Colonic mucosa (tissue), 4 donors: ENCODE measurements at regions of chr7 and their contacts with region 1.

Region 1: DNA sequence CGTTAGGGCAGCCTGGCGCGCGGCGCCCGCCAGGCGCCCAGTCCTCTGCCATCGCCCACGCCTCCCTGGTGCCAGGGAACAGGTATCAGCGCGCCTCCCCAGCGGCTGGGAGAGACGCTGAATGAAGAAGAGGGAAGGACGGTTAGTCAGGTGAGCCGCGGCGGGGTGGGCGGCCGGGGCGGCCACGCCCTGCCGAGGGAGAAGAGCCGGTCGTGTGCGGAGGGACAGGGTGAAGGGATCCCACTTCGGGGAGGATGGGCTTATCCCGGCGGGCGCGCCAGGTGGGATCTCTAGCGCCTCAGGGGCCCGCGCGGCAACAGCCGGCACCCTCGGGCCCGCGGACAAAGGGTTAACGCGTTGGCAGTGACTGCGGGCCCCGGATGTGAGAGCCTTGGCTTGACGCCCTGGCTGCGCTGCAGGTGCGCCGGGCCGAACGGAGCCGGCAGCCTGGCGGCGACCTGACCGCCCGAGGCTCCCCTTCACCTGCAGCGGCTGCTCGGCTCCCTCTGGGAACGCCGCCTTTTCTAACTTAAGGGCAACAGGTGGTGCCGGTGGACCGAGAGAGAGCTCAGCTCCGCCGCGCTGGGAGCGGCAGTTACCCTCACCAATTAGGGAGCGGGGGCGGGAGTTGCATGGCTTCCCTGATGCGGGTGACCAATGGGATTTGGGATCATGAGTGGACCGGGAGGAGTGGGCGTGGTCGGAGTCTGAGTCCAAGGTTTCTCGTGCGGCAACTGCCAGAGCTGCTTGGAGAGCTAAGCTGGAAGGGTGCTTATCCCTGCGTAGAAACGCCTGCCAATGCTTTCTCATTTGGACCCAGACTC is at the start of gene ARL4A:
- DNase-seq: peak; percentile 100
- H3K4me3 ChIP-seq: peak within 1 kb of the TSS; percentile 77
- H3K27ac ChIP-seq: peak within 1 kb of the TSS; percentile 90
- H3K4me1 ChIP-seq: no peaks in the 10 kb centered on the region
- H3K27me3 ChIP-seq: no peaks in the 10 kb centered on the region
- CTCF ChIP-seq: no peak
- total RNA-seq, gene ARL4A: 27.5 to 88.8 TPM

Region 2: DNA sequence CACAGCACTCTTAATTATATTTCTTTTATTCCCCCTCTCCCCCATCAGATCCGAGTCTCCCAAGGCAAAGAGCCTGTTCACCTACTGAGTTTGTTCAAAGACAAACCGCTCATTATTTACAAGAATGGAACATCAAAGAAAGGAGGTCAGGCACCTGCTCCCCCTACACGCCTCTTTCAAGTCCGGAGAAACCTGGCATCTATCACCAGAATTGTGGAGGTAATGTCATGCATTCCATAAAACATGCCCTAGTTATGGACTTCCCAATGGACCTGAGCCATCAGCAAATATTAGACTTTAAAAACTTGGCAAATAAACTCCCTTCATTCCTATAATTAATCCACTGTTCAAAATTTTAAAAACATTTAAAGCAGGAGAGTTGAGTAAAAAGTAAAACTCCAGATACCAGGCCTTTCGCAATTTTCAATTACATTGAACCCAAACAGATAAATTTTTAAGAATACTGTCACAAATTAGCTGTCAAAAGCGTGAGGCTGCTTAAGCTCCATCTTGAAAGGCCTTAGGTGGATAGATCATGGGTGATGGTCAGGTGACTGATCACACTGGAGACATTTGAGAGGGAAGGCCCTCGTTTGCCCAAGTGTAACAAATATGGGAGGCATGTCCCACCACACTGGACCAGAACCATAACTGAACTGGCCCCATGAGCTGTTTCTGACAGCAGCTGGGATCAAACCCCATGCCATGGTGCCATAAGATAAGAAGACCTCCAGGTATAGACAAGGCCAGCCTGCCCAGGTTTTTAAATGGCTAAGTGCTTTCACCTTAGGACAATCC is 46.6 kb before region 1 on chr7:
- intact Hi-C with region 1: loop called (anchors 2 kb)
- DNase-seq: no peak
- H3K4me3 ChIP-seq: no peak overlapping the region
- H3K27ac ChIP-seq: no peak overlapping the region
- H3K4me1 ChIP-seq: peaks cover 5% of the 10 kb centered on the region
- H3K27me3 ChIP-seq: no peaks in the 10 kb centered on the region
- CTCF ChIP-seq: no peak

Region 3: GRCh38 chr7:12771378-12771877 is 84.3 kb after region 1 on chr7:
- intact Hi-C with region 1: no loop called
- DNase-seq: peak; percentile 64
- H3K4me3 ChIP-seq: peak overlapping the region; percentile 0
- H3K27ac ChIP-seq: peak overlapping the region; percentile 63
- H3K4me1 ChIP-seq: no peaks in the 10 kb centered on the region
- H3K27me3 ChIP-seq: no peaks in the 10 kb centered on the region
- CTCF ChIP-seq: no peak

Region 4: GRCh38 chr7:12929476-12930140 is 242.5 kb after region 1 on chr7:
- intact Hi-C with region 1: loop called (anchors 10 kb)
- DNase-seq: no peak
- H3K4me3 ChIP-seq: no peak overlapping the region
- H3K27ac ChIP-seq: no peak overlapping the region
- H3K4me1 ChIP-seq: no peaks in the 10 kb centered on the region
- H3K27me3 ChIP-seq: no peaks in the 10 kb centered on the region
- CTCF ChIP-seq: no peak

Region 5: GRCh38 chr7:13117103-13117502 is 430.0 kb after region 1 on chr7:
- intact Hi-C with region 1: loop called (anchors 5 kb)
- DNase-seq: no peak
- H3K4me3 ChIP-seq: no peak overlapping the region
- H3K27ac ChIP-seq: no peak overlapping the region
- H3K4me1 ChIP-seq: no peaks in the 10 kb centered on the region
- H3K27me3 ChIP-seq: no peaks in the 10 kb centered on the region
- CTCF ChIP-seq: peak; percentile 31

Region 6: DNA sequence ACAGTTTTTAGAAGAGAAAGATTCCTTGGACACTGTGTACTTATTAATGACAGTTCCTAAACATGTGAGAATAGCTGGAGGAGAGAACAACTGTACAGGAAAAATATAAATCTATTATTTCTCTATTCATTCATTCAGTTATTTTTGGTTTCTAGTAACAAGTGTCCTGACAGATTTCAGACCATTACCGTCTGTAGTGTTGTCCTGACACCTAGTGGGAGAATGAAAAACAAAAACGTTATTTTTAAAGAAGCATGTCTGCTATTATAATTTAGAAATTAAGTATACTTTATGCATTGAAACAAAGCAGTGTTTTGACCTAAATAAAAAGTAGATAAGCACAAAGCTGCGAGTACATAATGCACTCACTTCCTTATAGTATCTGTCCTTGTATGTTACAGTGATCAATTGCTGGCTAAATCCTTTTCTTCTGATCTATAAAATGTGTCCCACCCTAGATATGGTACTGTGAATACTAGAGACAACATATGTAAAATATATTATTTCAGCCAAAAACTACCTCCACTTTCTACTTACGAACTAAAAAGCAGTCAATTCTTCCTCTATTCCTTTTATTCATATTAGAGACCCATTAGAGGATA is 575.9 kb after region 1 on chr7:
- intact Hi-C with region 1: loop called (anchors 5 kb)
- DNase-seq: no peak
- H3K4me3 ChIP-seq: no peak overlapping the region
- H3K27ac ChIP-seq: no peak overlapping the region
- H3K4me1 ChIP-seq: no peaks in the 10 kb centered on the region
- H3K27me3 ChIP-seq: no peaks in the 10 kb centered on the region
- CTCF ChIP-seq: no peak